Activated CD4-positive, alpha-beta T cell treated with anti-CD3 and anti-CD28 coated beads for 36 hours (primary cell): ENCODE measurements at regions of chr2 and their contacts with region 1.

Region 1: GRCh38 chr2:109128048-109128465 is 948 bp upstream of the SH3RF3 start:
- DNase-seq: peak; percentile 83
- ATAC-seq: peak; percentile 60
- H3K4me3 Mint-ChIP-seq: peak overlapping the region; percentile 76
- H3K27ac Mint-ChIP-seq: no peak overlapping the region
- H3K4me1 Mint-ChIP-seq: peaks cover 31% of the 10 kb centered on the region
- H3K27me3 Mint-ChIP-seq: peaks cover 18% of the 10 kb centered on the region

Region 2: DNA sequence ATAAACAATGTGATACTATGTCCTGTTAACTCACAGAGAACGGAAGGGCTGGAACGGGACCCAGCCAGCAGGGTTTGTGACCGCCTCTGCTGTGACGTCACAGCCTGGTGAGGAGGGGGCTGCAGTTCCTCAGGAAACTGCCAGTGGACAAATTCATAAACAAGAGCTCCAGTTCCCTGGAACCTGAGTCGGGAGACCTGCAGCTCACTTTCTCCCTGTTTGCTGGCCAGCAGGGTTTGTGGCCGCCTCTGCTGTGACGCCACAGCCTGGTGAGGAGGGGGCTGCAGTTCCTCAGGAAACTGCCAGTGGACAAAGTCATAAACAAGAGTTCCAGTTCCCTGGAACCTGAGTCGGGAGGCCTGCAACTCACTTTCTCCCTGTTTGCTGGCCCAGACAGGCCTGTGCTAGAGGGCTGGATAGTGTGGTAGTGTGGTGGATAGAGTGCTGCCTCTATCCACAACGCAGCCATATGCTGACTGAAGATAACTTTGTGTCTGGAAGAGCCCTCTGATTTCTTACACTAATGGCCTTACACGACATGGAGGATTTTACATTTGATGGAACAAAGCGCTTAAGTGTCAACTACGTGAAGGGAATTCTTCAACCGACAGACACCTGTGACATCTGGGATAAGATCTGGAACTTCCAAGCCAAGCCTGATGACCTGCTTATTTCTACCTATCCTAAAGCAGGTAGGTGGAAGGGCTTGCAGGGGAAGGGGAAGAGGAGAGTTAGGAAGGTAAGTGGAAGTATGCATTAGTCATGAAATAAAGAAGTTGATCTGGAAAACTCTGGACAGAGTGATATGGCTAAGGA is 750.0 kb before region 1 on chr2 and contains the start of gene SULT1C4:
- CTCF ChIA-PET with region 1: no interaction called
- POLR2A ChIA-PET with region 1: no interaction called
- intact Hi-C with region 1: no loop called
- DNase-seq: no peak
- ATAC-seq: no peak
- H3K4me3 Mint-ChIP-seq: no peak within 1 kb of the TSS
- H3K27ac Mint-ChIP-seq: no peak within 1 kb of the TSS
- H3K4me1 Mint-ChIP-seq: no peaks in the 10 kb centered on the region
- H3K27me3 Mint-ChIP-seq: peaks cover 2% of the 10 kb centered on the region
- total RNA-seq, gene SULT1C4: not detected

Region 3: GRCh38 chr2:109031476-109032228 is 96.4 kb before region 1 on chr2:
- CTCF ChIA-PET with region 1: no interaction called
- POLR2A ChIA-PET with region 1: no interaction called
- intact Hi-C with region 1: loop called in 1 of 2 experiments (anchors 5 kb)
- DNase-seq: peak; percentile 77
- ATAC-seq: peak; percentile 63
- H3K4me3 Mint-ChIP-seq: peak overlapping the region; percentile 71
- H3K27ac Mint-ChIP-seq: peak overlapping the region; percentile 86
- H3K4me1 Mint-ChIP-seq: peaks cover 61% of the 10 kb centered on the region
- H3K27me3 Mint-ChIP-seq: no peaks in the 10 kb centered on the region

Region 4: GRCh38 chr2:109110170-109110569 is 17.9 kb before region 1 on chr2:
- CTCF ChIA-PET with region 1: no interaction called
- POLR2A ChIA-PET with region 1: no interaction called
- intact Hi-C with region 1: no loop called
- DNase-seq: no peak
- ATAC-seq: no peak
- H3K4me3 Mint-ChIP-seq: no peak overlapping the region
- H3K27ac Mint-ChIP-seq: no peak overlapping the region
- H3K4me1 Mint-ChIP-seq: no peaks in the 10 kb centered on the region
- H3K27me3 Mint-ChIP-seq: no peaks in the 10 kb centered on the region

Region 5: GRCh38 chr2:109284826-109285225 is 156.8 kb after region 1 on chr2:
- CTCF ChIA-PET with region 1: no interaction called
- POLR2A ChIA-PET with region 1: no interaction called
- intact Hi-C with region 1: loop called in 1 of 2 experiments (anchors 5 kb)
- DNase-seq: no peak
- ATAC-seq: no peak
- H3K4me3 Mint-ChIP-seq: no peak overlapping the region
- H3K27ac Mint-ChIP-seq: no peak overlapping the region
- H3K4me1 Mint-ChIP-seq: no peaks in the 10 kb centered on the region
- H3K27me3 Mint-ChIP-seq: no peaks in the 10 kb centered on the region

Region 6: GRCh38 chr2:109402180-109402579 is 274.1 kb after region 1 on chr2:
- CTCF ChIA-PET with region 1: no interaction called
- POLR2A ChIA-PET with region 1: no interaction called
- intact Hi-C with region 1: loop called in 1 of 2 experiments (anchors 5 kb)
- DNase-seq: no peak
- ATAC-seq: no peak
- H3K4me3 Mint-ChIP-seq: no peak overlapping the region
- H3K27ac Mint-ChIP-seq: no peak overlapping the region
- H3K4me1 Mint-ChIP-seq: peaks cover 26% of the 10 kb centered on the region
- H3K27me3 Mint-ChIP-seq: no peaks in the 10 kb centered on the region

Region 7: DNA sequence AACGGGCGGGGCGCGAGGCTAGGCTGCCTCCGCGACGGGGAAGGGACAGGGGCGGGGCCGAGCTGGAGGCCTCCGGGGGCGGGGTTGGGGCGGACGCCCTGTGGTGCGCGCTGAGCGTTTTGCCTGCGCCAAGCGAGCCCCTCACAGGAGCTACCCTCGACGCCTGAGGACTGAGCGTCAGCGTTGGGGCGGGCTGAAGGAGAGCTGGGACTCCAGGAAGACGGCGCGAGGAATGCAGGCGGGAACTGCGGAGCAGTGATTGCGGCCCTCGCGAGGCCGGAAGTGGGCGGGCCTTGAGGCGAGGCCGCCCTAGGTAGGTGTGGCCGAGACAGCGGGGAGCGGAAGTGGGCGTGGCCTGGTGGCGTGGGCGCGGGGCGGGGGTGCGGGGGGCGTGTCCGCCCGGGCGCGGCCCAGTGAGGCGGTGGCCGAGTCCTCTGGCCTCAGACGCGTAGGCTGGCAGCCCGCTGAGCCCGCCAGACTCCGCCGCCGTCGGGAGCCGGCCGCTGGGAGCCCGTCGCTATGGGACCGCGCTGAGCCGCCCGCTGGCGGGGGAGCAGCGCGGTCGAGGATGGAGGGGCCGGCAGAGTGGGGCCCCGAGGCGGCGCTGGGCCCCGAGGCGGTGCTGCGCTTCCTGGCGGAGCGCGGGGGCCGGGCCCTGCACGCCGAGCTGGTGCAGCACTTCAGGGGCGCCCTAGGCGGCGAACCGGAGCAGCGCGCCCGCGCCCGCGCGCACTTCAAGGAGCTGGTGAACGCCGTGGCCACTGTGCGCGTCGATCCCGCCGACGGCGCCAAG is 486.1 kb after region 1 on chr2 and contains the starts of genes SEPTIN10 and SOWAHC:
- CTCF ChIA-PET with region 1: no interaction called
- POLR2A ChIA-PET with region 1: no interaction called
- intact Hi-C with region 1: loop called in 1 of 2 experiments (anchors 5 kb)
- DNase-seq: peak; percentile 92
- ATAC-seq: peak; percentile 91
- H3K4me3 Mint-ChIP-seq: peak within 1 kb of the TSS; percentile 80
- H3K27ac Mint-ChIP-seq: peak within 1 kb of the TSS; percentile 37
- H3K4me1 Mint-ChIP-seq: peaks cover 16% of the 10 kb centered on the region
- H3K27me3 Mint-ChIP-seq: peaks cover 54% of the 10 kb centered on the region
- total RNA-seq, gene SEPTIN10: 5.8 to 6.3 TPM
- total RNA-seq, gene SOWAHC: 0.63 to 0.98 TPM